Naive thymus-derived CD8-positive, alpha-beta T cell (primary cell): ENCODE measurements at regions of chr7 and their contacts with region 1.

Region 1: GRCh38 chr7:1137510-1138167 is 22.4 kb downstream of the ZFAND2A start:
- DNase-seq: no peak
- ATAC-seq: peak; percentile 71 to 73
- H3K4me3 Mint-ChIP-seq: peak overlapping the region; percentile 87 to 98 (median 92)
- H3K27ac Mint-ChIP-seq: peak overlapping the region; percentile 76 to 98 (median 94)
- H3K4me1 Mint-ChIP-seq: peaks cover 12 to 26% (median 21%) of the 10 kb centered on the region in 4 donors
- H3K27me3 Mint-ChIP-seq: peaks cover 0 to 2% (median 0%) of the 10 kb centered on the region in 5 donors

Region 2: DNA sequence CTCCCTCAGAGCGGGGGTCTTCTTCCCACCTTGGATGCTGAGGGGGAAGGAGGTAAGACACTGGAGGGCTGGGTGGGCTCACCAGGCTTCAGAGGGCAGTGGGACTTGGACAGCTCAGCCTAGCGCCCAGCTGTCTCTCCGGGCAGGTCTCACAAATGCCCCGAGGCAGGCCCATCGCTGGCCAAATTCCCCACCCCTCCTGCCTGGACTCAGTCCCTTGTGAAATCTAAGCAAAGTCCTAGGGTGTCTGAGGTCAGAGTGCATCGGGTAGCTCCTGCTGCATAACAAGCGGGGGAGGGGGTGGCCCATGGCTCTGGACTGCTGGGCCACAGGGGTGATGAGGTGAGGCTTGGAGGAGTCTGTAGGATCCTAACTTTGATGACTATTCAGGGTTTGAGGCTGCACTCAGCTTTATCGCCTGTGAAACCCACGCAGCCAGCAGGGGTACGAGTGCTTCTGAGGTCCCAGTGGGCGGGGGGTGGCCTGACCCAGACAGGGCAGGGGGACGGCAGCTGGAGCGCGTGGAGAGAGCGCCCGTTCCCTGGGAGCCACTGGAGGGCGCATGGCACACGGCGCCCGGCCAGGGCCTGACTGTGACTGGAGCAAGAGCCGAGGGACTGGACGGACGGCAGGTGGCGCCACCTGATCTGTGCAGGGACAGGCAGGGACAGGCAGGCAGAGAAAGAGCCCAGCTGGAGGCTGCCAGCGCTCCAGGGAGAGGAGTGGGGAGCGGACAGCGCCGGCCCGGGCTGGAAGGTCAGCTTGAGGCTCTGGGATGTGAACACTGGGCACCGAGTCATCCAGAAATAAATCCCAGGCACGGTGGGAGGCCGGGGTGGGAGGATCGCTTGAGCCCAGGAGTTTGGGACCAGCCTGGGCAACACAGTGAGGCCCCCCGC is 144.7 kb before region 1 on chr7:
- POLR2A ChIA-PET with region 1: interaction called, 12 read pairs
- DNase-seq: peak; percentile 84 to 96 (median 90)
- ATAC-seq: peak; percentile 99
- H3K4me3 Mint-ChIP-seq: no peak overlapping the region
- H3K27ac Mint-ChIP-seq: no peak overlapping the region
- H3K4me1 Mint-ChIP-seq: peaks cover 3 to 8% (median 7%) of the 10 kb centered on the region in 4 donors
- H3K27me3 Mint-ChIP-seq: no peaks in the 10 kb centered on the region

Region 3: DNA sequence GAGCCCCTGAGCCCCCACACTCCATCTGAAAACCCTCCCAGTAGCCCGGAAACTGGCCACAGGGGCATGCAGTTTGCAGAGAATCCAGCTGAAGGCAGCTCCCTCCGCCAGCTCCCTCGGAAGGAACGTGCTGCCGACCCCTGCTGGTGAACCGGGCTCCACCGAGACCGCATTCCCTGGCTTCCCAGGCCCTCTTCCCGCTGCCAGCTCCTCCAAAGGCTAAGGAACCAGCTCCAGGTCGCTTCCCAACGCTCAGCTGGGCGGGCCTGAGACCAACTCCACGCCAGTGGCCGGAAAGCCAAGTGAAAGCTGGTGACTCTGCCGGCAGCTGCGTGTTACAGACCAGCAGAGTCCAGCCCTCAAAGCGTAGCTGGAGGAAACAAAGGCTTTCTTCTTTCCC is 13.9 kb before region 1 on chr7:
- POLR2A ChIA-PET with region 1: no interaction called
- DNase-seq: no peak
- ATAC-seq: no peak
- H3K4me3 Mint-ChIP-seq: no peak overlapping the region
- H3K27ac Mint-ChIP-seq: no peak overlapping the region
- H3K4me1 Mint-ChIP-seq: peaks cover 5 to 8% (median 6%) of the 10 kb centered on the region in 4 donors
- H3K27me3 Mint-ChIP-seq: no peaks in the 10 kb centered on the region

Region 4: DNA sequence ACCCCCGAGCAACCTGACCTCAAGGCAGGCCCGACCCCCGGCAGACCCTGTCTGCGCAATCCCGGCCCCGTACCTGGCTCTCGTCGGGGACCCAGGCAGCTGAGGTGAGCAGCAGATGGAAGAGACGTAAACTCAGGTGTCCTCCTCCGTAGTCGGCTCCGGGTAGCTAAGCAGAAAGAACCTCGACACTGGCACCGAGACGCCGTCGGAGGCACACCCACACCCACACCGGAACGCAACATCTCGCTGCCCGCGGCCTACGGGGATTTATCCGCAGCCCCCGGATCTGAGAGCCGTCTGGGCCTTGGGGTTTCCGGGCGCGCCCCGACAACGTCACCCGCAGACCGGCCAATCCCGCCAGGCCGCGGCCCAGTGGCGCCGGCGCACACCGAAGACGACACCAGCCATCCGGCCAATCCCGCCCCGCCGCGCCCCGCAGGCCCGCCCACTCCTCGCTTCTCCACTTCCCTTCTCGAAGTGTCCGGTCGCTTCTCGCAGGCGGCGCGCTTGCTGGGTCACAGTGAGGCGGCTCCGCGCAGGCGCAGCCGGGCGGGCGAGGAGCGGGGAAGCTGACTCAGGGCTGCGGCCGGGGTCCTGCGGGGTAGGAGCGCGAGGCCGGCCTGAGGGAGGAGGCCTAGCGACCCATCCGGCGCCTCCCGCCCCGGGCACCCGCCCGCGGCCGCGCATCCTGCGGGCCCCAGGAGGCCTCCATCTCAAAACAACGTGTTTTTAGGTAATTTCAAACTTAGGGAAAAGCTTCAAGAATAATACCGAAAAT is 22.4 kb after region 1 on chr7 and contains the start of gene ZFAND2A:
- POLR2A ChIA-PET with region 1: interaction called, 31 read pairs
- DNase-seq: peak; percentile 95 to 99 (median 98)
- ATAC-seq: peak; percentile 96 to 98
- H3K4me3 Mint-ChIP-seq: peak within 1 kb of the TSS; percentile 82 to 94 (median 86)
- H3K27ac Mint-ChIP-seq: peak within 1 kb of the TSS; percentile 86 to 97 (median 94)
- H3K4me1 Mint-ChIP-seq: peaks cover 14 to 36% (median 29%) of the 10 kb centered on the region in 4 donors
- H3K27me3 Mint-ChIP-seq: no peaks in the 10 kb centered on the region
- polyA plus RNA-seq, gene ZFAND2A: 33.5 to 59.9 (median 56.0) TPM

Region 5: DNA sequence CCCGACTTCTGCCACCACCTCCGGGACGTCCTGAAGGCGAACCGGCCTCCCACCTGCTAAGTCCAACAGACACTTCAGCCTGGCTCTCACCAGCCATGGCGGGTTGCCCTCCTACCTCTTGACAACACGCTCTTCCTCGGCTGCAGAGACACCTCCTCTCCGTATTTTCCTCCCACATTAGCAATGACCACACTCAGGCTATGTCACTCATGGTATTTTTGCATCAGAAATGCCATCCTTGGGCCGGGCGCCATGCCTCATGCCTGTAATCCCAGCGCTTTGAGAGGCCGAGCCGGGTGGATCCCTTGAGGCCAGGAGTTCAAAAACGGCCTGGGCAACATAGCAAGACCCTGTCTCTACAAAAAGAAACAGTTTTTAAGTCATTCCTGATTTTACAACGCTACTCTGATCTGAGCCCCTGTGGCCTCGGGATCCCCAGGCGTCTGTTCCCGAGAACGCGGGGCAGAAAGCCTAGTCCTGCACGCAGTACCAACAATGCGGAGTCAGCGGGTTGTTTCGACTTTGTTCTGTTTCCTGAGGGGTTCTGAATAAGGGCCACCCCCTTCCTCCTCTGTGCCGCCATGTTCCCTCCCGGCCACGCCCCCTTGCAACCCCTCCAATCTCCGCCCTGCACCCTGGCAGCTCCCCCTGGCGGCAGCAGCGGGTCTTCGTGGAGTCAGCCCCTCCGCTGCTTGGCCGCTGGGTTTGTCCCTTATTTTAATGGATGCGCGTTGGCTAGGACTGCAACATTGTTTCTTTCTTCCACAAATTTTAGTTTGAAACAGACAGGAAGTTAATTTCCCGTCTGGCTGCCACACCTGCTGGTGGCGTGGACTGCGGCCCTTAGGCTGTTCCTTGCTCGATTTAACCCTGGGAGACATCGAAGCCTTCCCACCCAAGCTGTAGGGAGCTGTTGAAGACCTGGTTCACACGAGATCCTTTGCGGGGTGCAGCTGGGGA is 32.0 kb after region 1 on chr7:
- POLR2A ChIA-PET with region 1: interaction called, 10 read pairs
- DNase-seq: peak; percentile 56 to 99 (median 93)
- ATAC-seq: peak; percentile 98 to 99
- H3K4me3 Mint-ChIP-seq: peak overlapping the region; percentile 28 to 93 (median 88)
- H3K27ac Mint-ChIP-seq: peak overlapping the region; percentile 53 to 98 (median 96)
- H3K4me1 Mint-ChIP-seq: peaks cover 4 to 17% (median 9%) of the 10 kb centered on the region in 4 donors
- H3K27me3 Mint-ChIP-seq: no peaks in the 10 kb centered on the region